Activated naive CD4-positive, alpha-beta T cell treated with anti-CD3 and anti-CD28 coated beads for 36 hours (primary cell): ENCODE measurements at regions of chr19 and their contacts with region 1.

Region 1: GRCh38 chr19:29671393-29672160 is 6.3 kb downstream of the PLEKHF1 start:
- DNase-seq: peak; percentile 96
- H3K4me3 Mint-ChIP-seq: peak overlapping the region; percentile 69
- H3K27ac Mint-ChIP-seq: peak overlapping the region; percentile 96
- H3K4me1 Mint-ChIP-seq: peaks cover 91% of the 10 kb centered on the region
- H3K27me3 Mint-ChIP-seq: no peaks in the 10 kb centered on the region

Region 2: DNA sequence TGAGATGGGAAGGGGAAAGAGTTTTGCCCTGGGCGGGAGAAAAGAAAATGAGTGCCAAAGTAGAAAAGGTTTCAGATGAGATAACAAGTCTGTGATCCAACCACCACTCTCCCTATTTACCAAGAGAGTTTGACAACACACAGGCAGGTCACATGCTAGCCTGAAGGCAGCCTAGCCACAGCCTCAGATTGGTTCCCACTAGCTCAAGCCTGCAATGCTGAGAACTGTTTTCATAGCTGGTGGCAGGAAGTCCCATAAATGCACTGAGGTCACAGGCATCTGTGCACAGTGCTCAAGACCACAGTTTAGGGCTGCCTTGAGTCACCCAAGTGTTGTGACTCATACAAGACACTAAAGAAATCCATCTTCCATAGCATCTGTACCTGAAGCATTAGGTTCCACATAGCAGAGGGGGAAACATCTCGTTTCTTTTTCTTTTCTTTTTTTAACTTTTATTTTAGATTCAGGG is 84.0 kb before region 1 on chr19:
- CTCF ChIA-PET with region 1: no interaction called
- intact Hi-C with region 1: loop called (anchors 1 kb)
- DNase-seq: peak; percentile 84
- H3K4me3 Mint-ChIP-seq: no peak overlapping the region
- H3K27ac Mint-ChIP-seq: peak overlapping the region; percentile 76
- H3K4me1 Mint-ChIP-seq: peaks cover 18% of the 10 kb centered on the region
- H3K27me3 Mint-ChIP-seq: peaks cover 39% of the 10 kb centered on the region

Region 3: DNA sequence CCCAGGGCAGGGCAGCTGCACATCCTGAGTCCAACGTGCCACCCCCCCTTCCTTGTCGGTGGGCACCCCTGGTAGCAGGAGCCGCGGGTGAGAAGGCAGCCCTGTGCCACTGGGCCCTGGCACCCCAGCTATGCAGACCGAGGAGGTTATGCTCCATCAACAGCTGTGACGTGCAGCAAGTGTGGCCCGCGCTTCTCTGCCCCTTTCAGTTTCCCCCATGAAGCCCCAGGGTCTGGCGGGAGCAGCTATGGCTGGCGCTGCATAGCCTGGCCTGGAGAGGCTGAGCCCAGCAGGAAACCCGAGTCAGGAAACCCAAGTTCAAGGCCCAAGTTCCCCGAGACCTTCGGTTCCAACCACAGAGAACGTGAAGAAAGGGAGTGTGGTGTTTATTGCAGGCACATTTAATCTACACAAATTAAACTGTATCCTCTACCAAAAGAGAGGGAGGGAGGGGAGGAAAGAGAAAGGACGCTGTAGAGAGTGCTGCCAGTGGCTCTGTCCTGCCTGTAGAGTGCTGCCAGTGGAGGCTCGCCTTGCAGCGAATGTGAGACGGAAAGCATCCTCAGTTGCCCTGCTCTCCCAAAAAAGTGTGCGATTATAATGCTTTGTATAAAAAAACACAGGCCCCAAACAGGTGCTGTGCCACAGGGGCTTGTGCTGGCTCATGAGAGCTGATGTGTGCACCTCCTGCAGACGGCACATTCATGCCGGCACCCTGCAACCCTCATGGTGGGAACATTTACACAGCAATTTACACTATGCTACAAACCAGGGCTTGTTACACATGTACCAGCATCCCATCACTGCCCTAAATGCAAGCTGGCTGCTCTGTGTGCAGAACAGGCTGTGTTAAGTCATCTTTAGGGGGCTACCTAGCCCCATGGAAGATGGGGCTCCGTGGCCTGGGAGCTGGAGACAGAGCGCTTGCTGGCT is 49.2 kb before region 1 on chr19:
- CTCF ChIA-PET with region 1: interaction called, 9 read pairs
- intact Hi-C with region 1: loop called (anchors 2 kb)
- DNase-seq: peak; percentile 23
- H3K4me3 Mint-ChIP-seq: no peak overlapping the region
- H3K27ac Mint-ChIP-seq: no peak overlapping the region
- H3K4me1 Mint-ChIP-seq: peaks cover 33% of the 10 kb centered on the region
- H3K27me3 Mint-ChIP-seq: no peaks in the 10 kb centered on the region

Region 4: DNA sequence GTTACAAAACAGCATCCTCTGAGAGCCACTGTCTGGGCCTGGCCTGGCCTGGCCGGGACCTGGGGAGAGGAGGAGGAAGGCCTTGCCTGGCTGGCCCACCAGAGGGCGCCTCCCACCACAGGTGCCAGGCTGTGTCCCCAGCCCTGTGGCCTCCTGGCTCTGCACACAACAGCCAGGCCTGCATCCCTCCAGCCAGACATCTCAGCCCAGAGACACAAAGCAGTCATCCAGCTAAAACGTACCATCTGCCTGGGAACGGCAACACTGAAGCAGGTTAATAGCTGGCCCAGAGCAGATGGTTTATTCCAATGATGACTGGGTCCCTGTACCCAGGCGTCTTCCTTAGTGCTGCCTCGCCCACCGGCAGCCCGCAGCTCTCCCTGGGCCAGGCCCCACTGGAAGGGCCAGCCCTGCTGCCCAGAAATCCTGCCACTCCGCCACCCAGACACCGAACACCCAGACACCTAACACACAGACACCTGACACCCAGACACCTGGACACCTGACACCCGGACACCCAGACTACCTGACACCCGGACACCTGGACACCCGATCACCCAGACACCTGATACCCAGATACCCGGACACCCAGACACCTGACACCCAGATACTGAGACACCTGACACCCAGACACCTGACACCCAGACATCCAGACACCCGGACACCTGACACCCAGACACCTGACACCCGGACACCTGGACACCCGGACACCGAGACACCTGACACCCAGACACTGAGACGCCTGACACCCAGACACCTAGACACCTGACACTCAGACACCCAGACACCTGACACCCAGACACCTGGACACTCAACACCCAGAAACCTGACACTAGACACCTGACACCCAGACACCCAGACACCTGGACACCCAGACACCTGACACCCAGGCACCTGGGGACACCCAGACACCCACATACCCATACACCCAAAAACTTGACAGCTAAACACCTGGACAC is 23.4 kb after region 1 on chr19:
- CTCF ChIA-PET with region 1: interaction called, 22 read pairs
- intact Hi-C with region 1: no loop called
- DNase-seq: peak; percentile 88
- H3K4me3 Mint-ChIP-seq: no peak overlapping the region
- H3K27ac Mint-ChIP-seq: no peak overlapping the region
- H3K4me1 Mint-ChIP-seq: peaks cover 11% of the 10 kb centered on the region
- H3K27me3 Mint-ChIP-seq: no peaks in the 10 kb centered on the region